ENCODE measurements at regions of chr6 and their contacts with region 1.

Region 1: DNA sequence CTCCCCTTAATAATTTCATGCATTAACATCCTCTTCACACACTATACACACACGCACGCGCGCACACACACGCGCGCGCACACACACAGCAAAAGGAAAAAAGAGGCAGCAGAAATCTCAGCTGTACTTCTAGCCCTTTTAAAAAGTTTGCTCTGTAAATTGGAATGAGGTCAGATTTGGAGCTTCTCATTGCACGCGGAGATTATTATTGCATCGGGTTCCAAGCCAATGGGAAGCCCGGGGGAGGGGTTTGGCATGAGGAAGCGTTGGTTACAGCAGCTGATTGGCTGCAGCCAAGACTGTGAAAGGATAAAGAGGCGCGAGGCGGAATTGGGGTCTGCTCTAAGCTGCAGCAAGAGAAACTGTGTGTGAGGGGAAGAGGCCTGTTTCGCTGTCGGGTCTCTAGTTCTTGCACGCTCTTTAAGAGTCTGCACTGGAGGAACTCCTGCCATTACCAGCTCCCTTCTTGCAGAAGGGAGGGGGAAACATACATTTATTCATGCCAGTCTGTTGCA is at the start of gene SOX4:
- DNase-seq: peak; percentile 99
- H3K4me3 ChIP-seq: peak within 1 kb of the TSS; percentile 85 to 98 (median 96)
- H3K27ac ChIP-seq: peak within 1 kb of the TSS; percentile 94
- H3K4me1 ChIP-seq: peaks cover 14% of the 10 kb centered on the region
- H3K27me3 ChIP-seq: no peaks in the 10 kb centered on the region
- CTCF ChIP-seq: no peak
- POLR2A ChIP-seq: peak; percentile 100
- total RNA-seq, gene SOX4: 121 and 127 TPM in 2 replicates

Region 2: GRCh38 chr6:20811109-20811746 is 782.2 kb before region 1 on chr6:
- CTCF ChIA-PET with region 1: interaction called, 4 read pairs
- POLR2A ChIA-PET with region 1: interaction called, 3 read pairs
- dilution Hi-C with region 1: no loop called
- intact Hi-C with region 1: loop called (anchors 1 kb)
- DNase-seq: peak; percentile 95
- H3K4me3 ChIP-seq: no peak overlapping the region
- H3K27ac ChIP-seq: peak overlapping the region; percentile 95
- H3K4me1 ChIP-seq: peaks cover 12% of the 10 kb centered on the region
- H3K27me3 ChIP-seq: no peaks in the 10 kb centered on the region
- CTCF ChIP-seq: no peak
- POLR2A ChIP-seq: no peak

Region 3: DNA sequence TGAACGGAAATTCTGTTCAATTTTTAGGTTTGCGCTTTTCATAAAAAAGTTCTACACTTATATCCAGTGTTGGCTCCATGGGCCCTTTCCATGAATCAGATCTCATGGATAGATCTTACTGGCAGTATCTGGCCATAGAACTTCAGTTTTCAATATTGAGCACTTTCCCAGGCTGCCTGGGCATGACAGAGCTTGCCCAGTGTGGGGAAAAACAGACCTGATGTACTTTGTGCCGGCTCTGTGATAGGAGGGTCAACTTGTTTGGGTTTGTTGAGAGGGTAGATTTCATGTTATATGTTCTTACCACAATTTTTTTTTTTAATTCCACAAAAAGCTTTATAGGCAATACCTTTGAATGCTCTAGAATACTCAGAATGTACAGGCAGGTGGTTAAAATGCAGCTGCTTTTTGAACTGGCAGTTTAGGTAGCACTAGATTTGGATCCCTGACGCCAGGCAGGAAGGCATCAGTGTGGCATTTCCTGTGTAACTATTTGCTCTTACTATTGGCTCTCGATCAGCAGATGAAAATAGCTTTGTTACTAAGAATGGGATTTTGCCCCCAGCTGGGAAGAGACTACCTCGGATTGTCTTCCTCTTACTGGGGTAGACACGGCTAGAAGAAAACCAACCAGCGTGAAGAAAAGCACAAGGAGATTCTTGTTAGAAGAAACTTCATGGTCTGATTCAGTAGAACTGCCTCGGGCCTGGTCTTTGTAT is 404.8 kb before region 1 on chr6:
- CTCF ChIA-PET with region 1: no interaction called
- POLR2A ChIA-PET with region 1: interaction called, 4 read pairs
- dilution Hi-C with region 1: no loop called
- intact Hi-C with region 1: loop called (anchors 2 kb)
- DNase-seq: peak; percentile 64
- H3K4me3 ChIP-seq: no peak overlapping the region
- H3K27ac ChIP-seq: peak overlapping the region; percentile 71
- H3K4me1 ChIP-seq: peaks cover 35% of the 10 kb centered on the region
- H3K27me3 ChIP-seq: no peaks in the 10 kb centered on the region
- CTCF ChIP-seq: no peak
- POLR2A ChIP-seq: no peak

Region 4: GRCh38 chr6:21556511-21556910 is 37.0 kb before region 1 on chr6:
- CTCF ChIA-PET with region 1: no interaction called
- POLR2A ChIA-PET with region 1: no interaction called
- dilution Hi-C with region 1: no loop called
- intact Hi-C with region 1: no loop called
- DNase-seq: peak; percentile 6
- H3K4me3 ChIP-seq: no peak overlapping the region
- H3K27ac ChIP-seq: no peak overlapping the region
- H3K4me1 ChIP-seq: no peaks in the 10 kb centered on the region
- H3K27me3 ChIP-seq: no peaks in the 10 kb centered on the region
- CTCF ChIP-seq: no peak
- POLR2A ChIP-seq: no peak

Region 5: GRCh38 chr6:21826023-21826422 is 232.6 kb after region 1 on chr6:
- CTCF ChIA-PET with region 1: interaction called, 3 read pairs
- POLR2A ChIA-PET with region 1: interaction called, 10 read pairs
- dilution Hi-C with region 1: no loop called
- intact Hi-C with region 1: loop called (anchors 5 kb)
- DNase-seq: no peak
- H3K4me3 ChIP-seq: no peak overlapping the region
- H3K27ac ChIP-seq: no peak overlapping the region
- H3K4me1 ChIP-seq: peaks cover 27% of the 10 kb centered on the region
- H3K27me3 ChIP-seq: no peaks in the 10 kb centered on the region
- CTCF ChIP-seq: no peak
- POLR2A ChIP-seq: no peak

Region 6: GRCh38 chr6:21987501-21987957 is 394.1 kb after region 1 on chr6:
- CTCF ChIA-PET with region 1: interaction called, 3 read pairs
- POLR2A ChIA-PET with region 1: interaction called, 3 read pairs
- dilution Hi-C with region 1: no loop called
- intact Hi-C with region 1: loop called (anchors 2 kb)
- DNase-seq: peak; percentile 96
- H3K4me3 ChIP-seq: peak overlapping the region in 1 of 3 experiments; percentile 26
- H3K27ac ChIP-seq: peak overlapping the region; percentile 88
- H3K4me1 ChIP-seq: peaks cover 33% of the 10 kb centered on the region
- H3K27me3 ChIP-seq: no peaks in the 10 kb centered on the region
- CTCF ChIP-seq: no peak
- POLR2A ChIP-seq: peak; percentile 21

Region 7: GRCh38 chr6:22737331-22737730 is 1143.9 kb after region 1 on chr6:
- CTCF ChIA-PET with region 1: no interaction called
- POLR2A ChIA-PET with region 1: interaction called, 4 read pairs
- dilution Hi-C with region 1: no loop called
- intact Hi-C with region 1: loop called (anchors 10 kb)
- DNase-seq: peak; percentile 52
- H3K4me3 ChIP-seq: no peak overlapping the region
- H3K27ac ChIP-seq: no peak overlapping the region
- H3K4me1 ChIP-seq: no peaks in the 10 kb centered on the region
- H3K27me3 ChIP-seq: no peaks in the 10 kb centered on the region
- CTCF ChIP-seq: peak; percentile 26 to 43
- POLR2A ChIP-seq: no peak

Measured in endothelial cell of umbilical vein (primary cell).